GM12878 (cell line): ENCODE measurements at regions of chr5 and their contacts with region 1.

Region 1: DNA sequence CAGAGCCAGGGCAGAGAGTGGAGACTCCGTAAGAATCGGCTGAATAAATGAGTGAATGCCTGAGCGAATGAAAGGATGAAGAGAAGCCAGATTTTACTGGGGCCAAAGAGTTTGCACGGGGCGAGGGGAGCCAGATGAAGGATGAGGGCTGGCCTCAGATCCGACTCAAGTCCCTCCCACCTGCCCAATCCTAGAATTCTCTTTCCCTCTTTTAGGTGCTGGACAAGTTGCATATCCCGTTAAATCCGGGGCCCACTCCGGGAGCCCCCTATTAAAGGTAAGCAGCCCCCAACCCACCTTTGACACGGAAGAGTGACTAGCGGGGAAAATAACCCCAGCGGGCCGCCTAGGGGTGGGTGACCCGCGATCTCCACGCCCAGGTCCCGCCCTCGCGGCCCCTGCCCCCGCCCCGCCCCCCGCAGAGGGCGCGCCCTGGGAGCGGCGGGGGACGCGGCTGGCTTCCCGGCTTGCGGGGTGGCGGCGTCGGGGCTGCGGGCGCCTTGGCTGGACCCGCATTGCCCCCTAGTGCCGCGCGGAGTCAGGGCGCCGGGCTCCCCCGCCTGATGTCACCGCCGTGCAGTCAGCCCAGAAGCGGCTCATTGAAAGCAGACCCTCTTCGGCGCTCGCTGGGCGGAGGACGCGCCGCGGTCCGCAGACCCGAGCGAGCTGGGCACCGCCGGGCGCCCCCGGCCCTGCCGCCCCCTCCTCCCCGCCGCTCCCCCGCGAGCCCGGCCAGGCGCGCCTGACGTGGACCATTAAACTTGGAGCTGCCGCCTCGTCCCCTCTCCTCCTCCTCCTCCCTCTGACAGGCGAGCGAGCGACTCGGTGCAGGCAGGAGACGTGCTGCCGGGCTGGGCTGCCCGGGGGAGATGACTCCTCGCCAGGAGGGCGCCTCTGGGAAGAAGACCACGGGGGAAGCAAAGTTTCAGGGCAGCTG is at the start of gene ADRA1B:
- DNase-seq: no peak
- ATAC-seq: peak; percentile 97
- H3K4me3 ChIP-seq: no peak within 1 kb of the TSS
- H3K27ac ChIP-seq: no peak within 1 kb of the TSS
- H3K4me1 ChIP-seq: no peaks in the 10 kb centered on the region
- H3K27me3 ChIP-seq: peaks cover 6 to 10% of the 10 kb centered on the region in 2 experiments
- CTCF ChIP-seq: peak; percentile 28 to 66 (median 49); a peak in 4 of 6 replicates
- EP300 ChIP-seq: no peak
- POLR2A ChIP-seq: no peak
- RAD21 ChIP-seq: peak; percentile 37
- polyA plus RNA-seq, gene ADRA1B: not detected

Region 2: GRCh38 chr5:159515909-159516415 is 400.2 kb before region 1 on chr5:
- CTCF ChIA-PET with region 1: interaction called, 3 read pairs
- POLR2A ChIA-PET with region 1: no interaction called
- RAD21 ChIA-PET with region 1: no interaction called
- SMC1A ChIA-PET with region 1: no interaction called
- in situ Hi-C with region 1: no loop called
- intact Hi-C with region 1: loop called (anchors 2 kb)
- DNase-seq: peak; percentile 26
- ATAC-seq: peak; percentile 97
- H3K4me3 ChIP-seq: no peak overlapping the region
- H3K27ac ChIP-seq: no peak overlapping the region
- H3K4me1 ChIP-seq: peaks cover 3% of the 10 kb centered on the region; the same call in 1 of the 2 replicates
- H3K27me3 ChIP-seq: no peaks in the 10 kb centered on the region
- CTCF ChIP-seq: peak; percentile 68 to 90 (median 89)
- EP300 ChIP-seq: no peak
- POLR2A ChIP-seq: no peak
- RAD21 ChIP-seq: peak; percentile 74